Psoas muscle (tissue), 8 donors: ENCODE measurements at regions of chr18 and their contacts with region 1.

Region 1: GRCh38 chr18:961644-962355 is 57.1 kb downstream of the ADCYAP1 start:
- DNase-seq: no peak
- ATAC-seq: no peak
- H3K4me3 ChIP-seq: peak overlapping the region; percentile 51
- H3K27ac ChIP-seq: no peak overlapping the region
- H3K4me1 ChIP-seq: no peaks in the 10 kb centered on the region
- H3K27me3 ChIP-seq: no peaks in the 10 kb centered on the region
- CTCF ChIP-seq: peak; percentile 64

Region 2: GRCh38 chr18:666177-666576 is 295.6 kb before region 1 on chr18:
- intact Hi-C with region 1: no loop called
- DNase-seq: no peak
- ATAC-seq: no peak
- H3K4me3 ChIP-seq: no peak overlapping the region
- H3K27ac ChIP-seq: no peak overlapping the region
- H3K4me1 ChIP-seq: no peaks in the 10 kb centered on the region
- H3K27me3 ChIP-seq: no peaks in the 10 kb centered on the region
- CTCF ChIP-seq: no peak

Region 3: DNA sequence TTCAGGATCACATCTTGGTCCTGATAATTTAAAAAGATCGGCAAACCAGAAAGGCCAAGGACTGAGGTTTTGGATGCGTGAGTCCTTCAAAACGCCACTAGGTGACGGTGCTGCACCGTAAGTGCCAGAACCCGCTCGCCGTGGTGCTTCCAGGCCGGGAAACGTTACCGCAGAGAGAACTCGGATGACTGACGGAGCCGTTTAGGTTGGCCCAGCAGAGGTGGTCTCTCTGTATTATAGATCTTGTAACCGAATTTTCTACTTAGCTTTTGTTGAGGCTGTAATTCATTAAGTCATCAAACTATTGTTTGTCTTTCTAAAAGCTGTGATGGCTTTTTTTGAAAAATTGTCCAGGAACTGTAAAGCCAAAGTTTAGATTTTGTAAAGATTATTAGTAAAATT is 96.9 kb before region 1 on chr18:
- intact Hi-C with region 1: loop called (anchors 10 kb)
- DNase-seq: peak; percentile 47 to 75
- ATAC-seq: peak; percentile 44 to 62 (median 57)
- H3K4me3 ChIP-seq: no peak overlapping the region
- H3K27ac ChIP-seq: no peak overlapping the region
- H3K4me1 ChIP-seq: no peaks in the 10 kb centered on the region
- H3K27me3 ChIP-seq: peaks cover 0 to 13% (median 0%) of the 10 kb centered on the region in 3 donors
- CTCF ChIP-seq: peak; percentile 83

Region 4: GRCh38 chr18:1124495-1124894 is 162.7 kb after region 1 on chr18:
- intact Hi-C with region 1: no loop called
- DNase-seq: no peak
- ATAC-seq: no peak
- H3K4me3 ChIP-seq: no peak overlapping the region
- H3K27ac ChIP-seq: no peak overlapping the region
- H3K4me1 ChIP-seq: no peaks in the 10 kb centered on the region
- H3K27me3 ChIP-seq: no peaks in the 10 kb centered on the region
- CTCF ChIP-seq: no peak